Caco-2 (cell line): ENCODE measurements at regions of chr3 and their contacts with region 1.

Region 1: GRCh38 chr3:32374788-32375595 is 16.7 kb upstream of the CMTM7 start:
- DNase-seq: peak; percentile 62 to 75
- H3K4me3 ChIP-seq: no peak overlapping the region
- H3K4me3 Mint-ChIP-seq: no peak overlapping the region
- H3K27ac Mint-ChIP-seq: no peak overlapping the region
- H3K4me1 ChIP-seq: no peaks in the 10 kb centered on the region
- H3K4me1 Mint-ChIP-seq: no peaks in the 10 kb centered on the region
- H3K27me3 ChIP-seq: no peaks in the 10 kb centered on the region
- H3K27me3 Mint-ChIP-seq: no peaks in the 10 kb centered on the region
- CTCF ChIP-seq: peak; percentile 48 to 61

Region 2: DNA sequence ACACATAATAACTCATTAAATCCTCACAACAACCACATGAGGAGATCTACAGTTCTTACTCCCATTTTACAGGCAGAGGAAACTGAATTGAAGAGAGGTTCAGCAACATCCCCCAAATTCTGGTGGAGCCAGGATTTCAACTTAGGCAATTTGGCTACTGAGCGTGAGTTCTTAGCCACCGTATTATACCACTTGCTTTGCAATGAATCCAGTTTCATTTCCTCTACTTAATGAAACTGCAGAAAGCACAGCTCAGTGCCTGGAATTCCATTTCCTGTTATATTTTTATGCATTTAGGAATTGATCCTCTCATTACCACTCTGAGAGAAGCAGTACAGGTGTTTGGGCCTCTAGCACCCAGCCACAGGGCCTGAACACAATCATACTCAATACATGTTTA is 389.2 kb before region 1 on chr3:
- CTCF ChIA-PET with region 1: no interaction called
- POLR2A ChIA-PET with region 1: no interaction called
- intact Hi-C with region 1: no loop called
- DNase-seq: no peak
- H3K4me3 ChIP-seq: no peak overlapping the region
- H3K4me3 Mint-ChIP-seq: no peak overlapping the region
- H3K27ac Mint-ChIP-seq: no peak overlapping the region
- H3K4me1 ChIP-seq: peaks cover 19% of the 10 kb centered on the region
- H3K4me1 Mint-ChIP-seq: no peaks in the 10 kb centered on the region
- H3K27me3 ChIP-seq: no peaks in the 10 kb centered on the region
- H3K27me3 Mint-ChIP-seq: no peaks in the 10 kb centered on the region
- CTCF ChIP-seq: no peak

Region 3: DNA sequence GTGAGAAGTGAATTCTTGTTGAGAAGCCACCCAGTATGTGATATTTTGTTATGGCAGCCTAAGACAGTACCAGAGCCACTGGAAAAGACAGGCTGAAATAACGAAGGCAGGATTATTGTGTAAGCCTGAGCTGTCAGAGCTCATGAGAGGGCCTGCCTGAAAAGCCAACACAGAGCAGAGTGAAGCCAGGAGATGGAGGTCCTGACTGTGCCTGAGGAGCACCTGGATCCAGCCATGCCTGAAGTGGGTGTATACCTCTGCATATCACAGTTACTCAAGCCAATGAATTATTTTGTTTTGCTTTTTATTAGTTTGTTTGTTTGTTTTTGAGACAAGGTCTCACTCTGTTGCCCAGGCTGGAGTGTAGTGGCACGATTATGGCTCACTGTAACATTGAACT is 12.5 kb after region 1 on chr3:
- CTCF ChIA-PET with region 1: no interaction called
- POLR2A ChIA-PET with region 1: no interaction called
- intact Hi-C with region 1: no loop called
- DNase-seq: no peak
- H3K4me3 ChIP-seq: no peak overlapping the region
- H3K4me3 Mint-ChIP-seq: no peak overlapping the region
- H3K27ac Mint-ChIP-seq: no peak overlapping the region
- H3K4me1 ChIP-seq: no peaks in the 10 kb centered on the region
- H3K4me1 Mint-ChIP-seq: peaks cover 13% of the 10 kb centered on the region
- H3K27me3 ChIP-seq: no peaks in the 10 kb centered on the region
- H3K27me3 Mint-ChIP-seq: no peaks in the 10 kb centered on the region
- CTCF ChIP-seq: no peak

Region 4: GRCh38 chr3:32401556-32402081 is 26.6 kb after region 1 on chr3:
- CTCF ChIA-PET with region 1: no interaction called
- POLR2A ChIA-PET with region 1: no interaction called
- intact Hi-C with region 1: loop called (anchors 1 kb)
- DNase-seq: peak; percentile 44 to 59
- H3K4me3 ChIP-seq: peak overlapping the region; percentile 33
- H3K4me3 Mint-ChIP-seq: peak overlapping the region; percentile 62
- H3K27ac Mint-ChIP-seq: peak overlapping the region; percentile 55
- H3K4me1 ChIP-seq: peaks cover 15% of the 10 kb centered on the region; the same call in 1 of the 2 replicates
- H3K4me1 Mint-ChIP-seq: peaks cover 25% of the 10 kb centered on the region
- H3K27me3 ChIP-seq: no peaks in the 10 kb centered on the region
- H3K27me3 Mint-ChIP-seq: no peaks in the 10 kb centered on the region
- CTCF ChIP-seq: no peak

Region 5: GRCh38 chr3:32428092-32429068 is 53.4 kb after region 1 on chr3:
- CTCF ChIA-PET with region 1: no interaction called
- POLR2A ChIA-PET with region 1: no interaction called
- intact Hi-C with region 1: no loop called
- DNase-seq: no peak
- H3K4me3 ChIP-seq: no peak overlapping the region
- H3K4me3 Mint-ChIP-seq: no peak overlapping the region
- H3K27ac Mint-ChIP-seq: no peak overlapping the region
- H3K4me1 ChIP-seq: peaks cover 7% of the 10 kb centered on the region
- H3K4me1 Mint-ChIP-seq: peaks cover 19% of the 10 kb centered on the region
- H3K27me3 ChIP-seq: no peaks in the 10 kb centered on the region
- H3K27me3 Mint-ChIP-seq: no peaks in the 10 kb centered on the region
- CTCF ChIP-seq: no peak

Region 6: DNA sequence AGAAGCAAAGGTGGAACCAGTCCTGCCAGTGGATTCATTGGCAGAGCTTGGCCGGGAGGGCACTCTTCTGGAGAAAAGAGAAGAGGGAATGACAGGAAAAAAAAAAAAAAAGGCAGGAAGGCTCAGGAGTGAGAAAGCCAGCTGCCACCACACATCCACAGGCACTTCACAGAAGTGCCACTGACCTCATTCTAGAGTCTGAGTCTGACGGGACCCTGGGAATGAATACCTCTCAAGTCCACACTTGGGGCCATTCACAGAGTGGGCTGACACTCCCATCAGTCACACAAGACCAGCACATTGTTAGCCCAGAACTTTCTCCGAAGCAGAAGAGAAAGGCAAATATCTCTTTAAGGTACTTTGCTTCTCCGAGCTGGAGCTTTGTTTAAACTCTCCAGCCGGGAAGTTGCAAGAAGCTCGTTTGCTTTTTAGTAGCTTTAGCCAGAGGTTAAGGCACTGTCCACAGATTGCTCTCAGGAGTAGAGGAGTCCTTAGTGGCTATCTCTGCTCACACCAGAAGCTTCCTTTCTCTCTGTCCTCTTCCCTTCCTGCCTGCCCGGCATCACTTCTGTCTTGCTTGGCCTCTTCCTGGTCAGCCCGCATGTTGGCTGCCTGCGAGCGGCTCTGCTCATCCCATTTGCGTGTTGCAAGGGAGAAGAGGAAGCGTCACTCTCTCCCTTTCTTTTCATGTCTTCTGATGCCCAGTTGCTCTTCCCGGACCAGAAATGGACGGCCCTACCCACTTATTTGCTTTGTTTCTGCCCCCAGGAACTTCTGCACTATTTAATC is 73.9 kb after region 1 on chr3:
- CTCF ChIA-PET with region 1: no interaction called
- POLR2A ChIA-PET with region 1: no interaction called
- intact Hi-C with region 1: no loop called
- DNase-seq: no peak
- H3K4me3 ChIP-seq: no peak overlapping the region
- H3K4me3 Mint-ChIP-seq: no peak overlapping the region
- H3K27ac Mint-ChIP-seq: no peak overlapping the region
- H3K4me1 ChIP-seq: no peaks in the 10 kb centered on the region
- H3K4me1 Mint-ChIP-seq: no peaks in the 10 kb centered on the region
- H3K27me3 ChIP-seq: no peaks in the 10 kb centered on the region
- H3K27me3 Mint-ChIP-seq: no peaks in the 10 kb centered on the region
- CTCF ChIP-seq: no peak